ENCODE measurements at regions of chr9 and their contacts with region 1.

Region 1: DNA sequence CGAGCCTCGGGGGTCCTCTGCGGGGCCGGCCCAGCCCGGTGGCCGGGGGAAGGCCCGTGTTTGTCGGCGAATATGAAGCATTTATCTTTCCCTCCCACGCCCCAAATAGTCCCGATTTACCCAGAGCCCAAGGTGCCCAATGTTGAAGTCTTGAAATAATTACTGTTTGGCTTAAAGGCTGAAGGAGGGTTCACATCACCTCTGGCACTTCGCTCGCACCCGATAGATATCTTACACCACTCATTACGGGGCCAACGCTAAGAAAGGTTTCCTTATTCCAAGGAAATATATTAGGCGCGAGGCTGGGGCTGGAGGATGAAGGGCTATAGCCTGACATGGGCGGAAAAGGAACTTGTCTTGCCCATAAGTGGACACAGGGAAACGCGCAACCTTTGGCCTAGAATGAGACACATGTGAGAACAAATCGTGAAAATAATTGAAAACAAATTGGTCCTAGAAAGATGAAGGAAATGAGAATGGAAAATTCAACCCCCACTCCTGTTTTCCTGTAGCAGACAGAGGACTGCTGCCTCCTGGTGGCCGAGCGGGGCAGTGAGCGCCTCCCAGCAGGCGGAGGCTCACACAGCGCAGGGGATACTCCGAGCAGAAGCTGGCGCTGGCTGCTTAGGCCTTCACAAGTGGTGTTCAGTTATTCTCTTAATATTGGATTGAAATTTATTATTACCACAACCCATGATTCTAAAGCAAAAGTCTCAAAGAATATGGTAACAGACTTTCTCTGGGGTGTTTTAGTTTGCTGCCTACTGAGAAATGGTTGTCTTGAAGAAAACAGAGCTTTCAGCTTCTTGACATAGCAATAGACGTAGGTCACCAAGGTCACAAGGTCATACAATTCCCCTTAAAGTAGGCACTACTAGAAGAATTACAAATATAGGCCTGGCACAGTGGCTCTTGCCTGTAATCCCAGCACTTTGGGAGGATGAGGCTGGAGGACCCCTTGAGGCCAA is 7.9 kb downstream of the CCL21 start:
- DNase-seq: peak; percentile 83
- ATAC-seq: peak; percentile 79
- H3K4me3 Mint-ChIP-seq: peak overlapping the region; percentile 70
- H3K27ac Mint-ChIP-seq: peak overlapping the region; percentile 36
- H3K4me1 Mint-ChIP-seq: peaks cover 5% of the 10 kb centered on the region
- H3K27me3 Mint-ChIP-seq: peaks cover 21% of the 10 kb centered on the region

Region 2: DNA sequence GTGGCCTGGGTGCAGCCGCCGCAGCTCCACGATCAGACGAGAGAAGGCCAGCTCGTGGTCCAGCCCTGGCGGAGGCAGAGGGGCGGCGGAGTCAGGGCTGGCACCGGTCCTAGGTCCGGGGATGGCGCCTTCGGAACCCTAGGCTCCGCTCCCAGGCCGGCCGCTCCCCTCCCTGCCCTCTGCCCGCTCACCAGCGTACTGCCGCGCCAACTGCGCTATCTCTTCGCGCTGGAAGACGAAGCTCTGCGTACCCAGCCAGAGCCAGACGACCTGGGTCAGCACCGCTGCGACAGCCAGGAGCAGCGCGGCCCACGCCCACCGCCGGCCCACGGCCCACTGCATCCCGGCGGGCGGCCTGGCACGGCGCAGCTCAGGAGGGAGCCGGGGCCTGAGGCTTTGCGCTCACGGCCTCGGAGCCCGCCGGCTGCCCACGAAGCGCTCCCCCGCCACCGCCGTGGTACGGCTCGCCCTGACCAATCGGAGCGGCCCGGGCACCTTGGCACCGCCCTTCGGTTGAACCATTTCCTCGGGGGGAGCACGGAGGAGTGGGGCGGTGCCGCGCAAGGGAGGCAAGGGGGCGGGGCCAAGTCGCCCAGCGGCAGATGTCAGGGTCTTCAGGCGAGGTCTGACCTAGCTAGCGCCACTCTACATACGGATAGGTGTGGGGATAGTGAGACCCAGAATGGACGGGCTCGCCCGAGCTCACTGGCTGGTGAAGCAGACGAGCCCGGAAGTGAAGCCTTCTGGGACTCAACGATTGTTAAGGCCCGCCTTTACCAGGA is 64.5 kb before region 1 on chr9 and contains the start of gene SIGMAR1:
- CTCF ChIA-PET with region 1: interaction called, 19 read pairs
- POLR2A ChIA-PET with region 1: interaction called, 3 read pairs
- DNase-seq: peak; percentile 94
- ATAC-seq: peak; percentile 91
- H3K4me3 Mint-ChIP-seq: peak within 1 kb of the TSS; percentile 85
- H3K27ac Mint-ChIP-seq: peak within 1 kb of the TSS; percentile 87
- H3K4me1 Mint-ChIP-seq: peaks cover 38% of the 10 kb centered on the region
- H3K27me3 Mint-ChIP-seq: no peaks in the 10 kb centered on the region
- total RNA-seq, gene SIGMAR1: 66.7 to 66.9 TPM

Region 3: DNA sequence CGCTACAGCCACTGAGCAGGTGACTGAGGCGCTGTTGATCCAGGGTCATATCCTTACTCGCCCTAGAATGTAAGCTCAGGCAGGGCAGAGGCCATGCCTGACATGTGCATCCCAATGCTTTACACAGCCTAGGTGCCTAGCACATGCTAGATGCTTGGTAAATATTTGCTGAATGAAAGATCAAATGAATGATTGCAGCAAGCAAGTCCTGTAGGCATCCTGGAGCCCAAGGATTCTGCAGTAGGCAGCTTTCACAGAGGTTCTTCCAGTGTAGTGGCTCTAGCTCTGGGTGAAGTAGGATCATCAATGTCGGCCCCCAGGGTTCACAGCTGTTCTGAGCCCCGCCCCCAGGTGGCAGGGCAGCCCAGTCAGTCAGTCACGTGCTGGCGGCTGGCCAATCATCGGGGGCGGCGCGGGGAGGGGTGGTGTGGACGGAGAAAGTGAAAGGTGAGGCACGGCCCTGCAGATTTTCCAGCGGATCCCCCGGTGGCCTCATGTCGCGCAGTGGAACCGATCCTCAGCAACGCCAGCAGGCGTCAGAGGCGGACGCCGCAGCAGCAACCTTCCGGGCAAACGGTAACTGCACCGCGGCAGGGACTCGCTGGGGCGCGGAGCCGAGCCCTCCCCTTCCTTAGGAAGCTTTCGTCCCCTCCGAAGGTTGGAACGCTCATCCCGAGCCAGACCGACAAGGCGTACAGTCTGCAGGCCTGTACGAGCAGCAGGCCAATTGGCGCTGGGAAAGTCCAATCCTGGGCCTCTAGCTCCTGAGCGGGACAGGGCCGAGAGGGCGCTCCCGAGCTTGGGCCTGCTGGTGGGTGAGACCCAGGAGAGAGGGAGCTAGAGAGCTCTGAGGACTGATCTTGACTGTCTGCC is 55.6 kb before region 1 on chr9 and contains the start of gene GALT:
- CTCF ChIA-PET with region 1: interaction called, 10 read pairs
- POLR2A ChIA-PET with region 1: no interaction called
- DNase-seq: peak; percentile 98
- ATAC-seq: peak; percentile 90
- H3K4me3 Mint-ChIP-seq: peak within 1 kb of the TSS; percentile 91
- H3K27ac Mint-ChIP-seq: peak within 1 kb of the TSS; percentile 88
- H3K4me1 Mint-ChIP-seq: peaks cover 36% of the 10 kb centered on the region
- H3K27me3 Mint-ChIP-seq: no peaks in the 10 kb centered on the region
- total RNA-seq, gene GALT: 79.1 to 83.9 TPM

Region 4: DNA sequence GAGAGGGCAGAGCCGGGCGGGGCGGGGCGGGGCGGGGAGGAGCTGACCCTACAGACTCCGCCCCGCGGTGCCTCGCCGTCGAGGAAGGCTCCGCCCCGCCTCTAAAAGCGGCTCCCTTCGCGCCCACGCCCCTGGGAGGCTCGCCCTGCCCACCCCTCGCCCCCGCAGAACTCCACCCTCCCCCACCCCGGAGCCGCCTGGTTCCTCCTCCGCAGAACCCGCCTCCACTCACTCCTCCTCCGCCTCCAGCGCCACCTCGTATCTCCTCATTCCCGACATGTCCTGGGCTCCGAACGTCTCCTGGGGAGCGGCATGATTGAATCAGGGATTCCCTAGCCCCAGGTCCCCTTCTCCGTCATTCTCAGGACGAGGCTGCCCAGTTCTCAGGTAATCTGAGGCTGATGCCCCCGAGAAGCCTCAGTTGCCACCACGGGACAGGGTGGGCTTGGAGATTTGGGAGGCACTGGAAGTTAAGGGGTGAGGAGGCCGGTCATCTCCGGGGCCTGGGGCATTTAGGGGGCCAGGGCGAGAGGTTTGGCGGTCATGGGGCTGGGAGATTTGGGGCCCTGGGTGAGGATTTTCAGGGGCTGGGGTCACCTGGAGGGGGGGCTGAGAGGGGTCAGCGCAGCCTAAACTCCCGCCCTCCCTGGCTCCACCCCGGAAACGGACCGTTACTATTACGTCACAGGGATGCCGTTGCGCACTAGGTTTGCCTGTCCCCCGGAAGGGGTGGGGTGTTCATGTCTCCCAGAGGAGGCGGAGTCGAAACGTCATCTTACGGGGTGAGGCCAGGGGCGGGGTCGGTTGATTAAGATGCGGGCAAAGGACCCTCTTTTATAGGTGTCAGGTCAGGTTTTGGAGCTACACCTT is 36.4 kb before region 1 on chr9:
- CTCF ChIA-PET with region 1: interaction called, 20 read pairs
- POLR2A ChIA-PET with region 1: no interaction called
- DNase-seq: peak; percentile 91
- ATAC-seq: peak; percentile 76
- H3K4me3 Mint-ChIP-seq: peak overlapping the region; percentile 84
- H3K27ac Mint-ChIP-seq: peak overlapping the region; percentile 93
- H3K4me1 Mint-ChIP-seq: peaks cover 43% of the 10 kb centered on the region
- H3K27me3 Mint-ChIP-seq: peaks cover 2% of the 10 kb centered on the region

Region 5: GRCh38 chr9:34675048-34675714 is 26.9 kb before region 1 on chr9:
- CTCF ChIA-PET with region 1: interaction called, 47 read pairs
- POLR2A ChIA-PET with region 1: no interaction called
- DNase-seq: peak; percentile 71
- ATAC-seq: peak; percentile 85
- H3K4me3 Mint-ChIP-seq: no peak overlapping the region
- H3K27ac Mint-ChIP-seq: no peak overlapping the region
- H3K4me1 Mint-ChIP-seq: no peaks in the 10 kb centered on the region
- H3K27me3 Mint-ChIP-seq: no peaks in the 10 kb centered on the region

Region 6: DNA sequence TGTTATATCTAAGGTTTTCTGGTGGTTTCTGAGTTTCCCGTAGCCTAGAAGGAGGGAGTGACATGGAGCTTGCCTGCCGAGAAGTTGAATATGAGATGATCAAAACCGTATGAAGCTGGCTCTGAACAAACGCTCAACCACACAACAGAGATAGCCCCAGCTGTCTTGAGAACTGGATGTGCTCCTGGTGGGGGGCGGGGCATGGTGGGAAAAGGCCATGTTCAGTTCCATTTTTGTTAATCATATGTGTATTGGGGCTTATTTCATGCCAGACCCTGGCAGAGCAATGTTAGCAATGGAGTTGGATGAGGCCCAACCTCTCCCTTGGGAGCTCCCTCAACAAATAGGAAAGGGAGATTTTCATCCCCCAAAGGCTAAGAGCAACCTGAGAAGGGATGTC is 15.8 kb before region 1 on chr9:
- CTCF ChIA-PET with region 1: interaction called, 12 read pairs
- POLR2A ChIA-PET with region 1: interaction called, 4 read pairs
- DNase-seq: no peak
- ATAC-seq: no peak
- H3K4me3 Mint-ChIP-seq: no peak overlapping the region
- H3K27ac Mint-ChIP-seq: no peak overlapping the region
- H3K4me1 Mint-ChIP-seq: no peaks in the 10 kb centered on the region
- H3K27me3 Mint-ChIP-seq: no peaks in the 10 kb centered on the region

Region 7: DNA sequence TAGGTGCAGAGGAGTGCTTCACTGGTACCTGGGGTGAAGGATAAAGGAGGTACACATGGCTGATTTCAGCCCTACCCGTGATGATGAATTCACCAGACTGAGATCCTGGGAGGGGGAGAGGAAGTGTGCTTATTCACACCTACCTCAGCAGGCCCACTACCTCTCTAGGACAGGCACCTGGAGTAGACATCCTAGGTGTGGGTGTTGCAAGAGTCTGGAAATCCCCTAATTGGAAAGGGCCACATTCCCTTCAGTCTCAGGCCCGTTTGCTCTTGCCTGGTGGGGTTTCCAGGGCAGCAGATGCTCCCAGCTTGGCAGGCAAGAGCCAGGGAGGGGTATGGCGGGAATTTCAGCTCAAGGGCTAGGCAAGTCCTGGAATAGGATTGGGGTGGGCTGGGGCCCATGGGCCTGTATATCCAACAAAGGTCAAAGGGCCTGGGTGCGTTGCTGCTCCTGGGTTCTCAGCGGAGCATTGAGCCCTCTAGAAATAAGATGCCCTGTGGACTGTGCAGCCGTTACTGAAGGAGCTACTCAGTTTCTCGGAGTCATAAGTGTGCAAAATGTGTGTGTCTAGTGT is 13.7 kb after region 1 on chr9:
- CTCF ChIA-PET with region 1: interaction called, 15 read pairs
- POLR2A ChIA-PET with region 1: no interaction called
- DNase-seq: no peak
- ATAC-seq: no peak
- H3K4me3 Mint-ChIP-seq: no peak overlapping the region
- H3K27ac Mint-ChIP-seq: no peak overlapping the region
- H3K4me1 Mint-ChIP-seq: no peaks in the 10 kb centered on the region
- H3K27me3 Mint-ChIP-seq: peaks cover 16% of the 10 kb centered on the region

Measured in activated CD8-positive, alpha-beta T cell treated with anti-CD3 and anti-CD28 coated beads, Interleukin-2, amount 10 ng/mL, durations not matched to agents 7 days and 5 days (primary cell).